Naive thymus-derived CD4-positive, alpha-beta T cell (primary cell): ENCODE measurements at regions of chr12 and their contacts with region 1.

Region 1: DNA sequence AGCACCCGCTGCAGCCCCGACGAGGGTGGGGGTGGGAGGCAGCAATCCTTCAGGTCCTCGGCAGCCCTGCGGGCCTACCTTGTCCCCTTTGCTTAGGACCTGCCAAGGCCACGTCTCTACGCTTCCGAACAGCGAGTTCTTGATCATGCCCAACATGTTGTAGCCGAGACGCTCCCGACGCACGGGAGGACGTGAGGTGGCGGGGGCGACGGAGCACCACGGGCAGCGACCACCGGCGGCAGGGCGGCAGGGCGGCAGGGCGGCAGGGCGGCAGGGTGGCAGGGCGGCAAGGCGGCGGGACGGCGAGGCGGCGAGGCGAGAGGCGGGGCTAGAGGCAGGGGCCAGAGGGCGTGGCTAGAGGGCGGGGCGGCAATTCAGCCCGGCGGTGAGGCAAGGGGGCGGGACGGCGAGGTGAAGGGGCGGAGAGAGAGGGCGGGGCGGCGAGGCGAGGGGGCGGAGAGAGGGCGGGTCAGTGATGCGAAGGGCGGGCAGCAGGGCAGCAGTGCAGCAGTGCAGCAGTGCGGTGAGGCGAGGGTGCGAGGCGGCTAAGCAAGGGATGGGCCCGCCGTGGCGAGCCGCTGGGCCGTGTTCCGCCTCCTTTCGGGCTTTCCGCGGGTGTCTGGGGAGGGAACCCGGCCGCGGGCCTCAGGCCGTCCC is at the start of gene HEBP1:
- DNase-seq: peak; percentile 86 to 99 (median 93)
- ATAC-seq: peak; percentile 97
- H3K4me3 ChIP-seq: peak within 1 kb of the TSS; percentile 74
- H3K4me3 Mint-ChIP-seq: peak within 1 kb of the TSS; percentile 90 to 98 (median 95)
- H3K27ac ChIP-seq: peak within 1 kb of the TSS; percentile 83
- H3K27ac Mint-ChIP-seq: peak within 1 kb of the TSS; percentile 53 to 96 (median 90)
- H3K4me1 ChIP-seq: peaks cover 8 to 23% of the 10 kb centered on the region in 2 donors
- H3K4me1 Mint-ChIP-seq: peaks cover 30 to 45% (median 35%) of the 10 kb centered on the region in 7 donors
- H3K27me3 ChIP-seq: peaks cover 0 to 5% of the 10 kb centered on the region in 2 donors
- H3K27me3 Mint-ChIP-seq: peaks cover 0 to 31% (median 0%) of the 10 kb centered on the region in 5 donors
- total RNA-seq, gene HEBP1: 10.9 to 23.4 (median 13.6) TPM

Region 2: GRCh38 chr12:12266873-12267741 is 733.0 kb before region 1 on chr12 and contains the start of gene LRP6:
- CTCF ChIA-PET with region 1: no interaction called
- POLR2A ChIA-PET with region 1: no interaction called
- intact Hi-C with region 1: loop called in 1 of 2 experiments (anchors 5 kb)
- DNase-seq: peak; percentile 57 to 83 (median 75)
- ATAC-seq: peak; percentile 91
- H3K4me3 ChIP-seq: peak within 1 kb of the TSS; percentile 86
- H3K4me3 Mint-ChIP-seq: peak within 1 kb of the TSS; percentile 79 to 93 (median 88)
- H3K27ac ChIP-seq: peak within 1 kb of the TSS; percentile 68
- H3K27ac Mint-ChIP-seq: peak within 1 kb of the TSS; percentile 29 to 88 (median 73)
- H3K4me1 ChIP-seq: peaks cover 8 to 10% of the 10 kb centered on the region in 2 donors
- H3K4me1 Mint-ChIP-seq: peaks cover 14 to 40% (median 31%) of the 10 kb centered on the region in 7 donors
- H3K27me3 ChIP-seq: peaks cover 0 to 10% of the 10 kb centered on the region in 2 donors
- H3K27me3 Mint-ChIP-seq: peaks cover 0 to 53% (median 14%) of the 10 kb centered on the region in 5 donors
- total RNA-seq, gene LRP6: 1.6 to 12.6 (median 7.4) TPM

Region 3: DNA sequence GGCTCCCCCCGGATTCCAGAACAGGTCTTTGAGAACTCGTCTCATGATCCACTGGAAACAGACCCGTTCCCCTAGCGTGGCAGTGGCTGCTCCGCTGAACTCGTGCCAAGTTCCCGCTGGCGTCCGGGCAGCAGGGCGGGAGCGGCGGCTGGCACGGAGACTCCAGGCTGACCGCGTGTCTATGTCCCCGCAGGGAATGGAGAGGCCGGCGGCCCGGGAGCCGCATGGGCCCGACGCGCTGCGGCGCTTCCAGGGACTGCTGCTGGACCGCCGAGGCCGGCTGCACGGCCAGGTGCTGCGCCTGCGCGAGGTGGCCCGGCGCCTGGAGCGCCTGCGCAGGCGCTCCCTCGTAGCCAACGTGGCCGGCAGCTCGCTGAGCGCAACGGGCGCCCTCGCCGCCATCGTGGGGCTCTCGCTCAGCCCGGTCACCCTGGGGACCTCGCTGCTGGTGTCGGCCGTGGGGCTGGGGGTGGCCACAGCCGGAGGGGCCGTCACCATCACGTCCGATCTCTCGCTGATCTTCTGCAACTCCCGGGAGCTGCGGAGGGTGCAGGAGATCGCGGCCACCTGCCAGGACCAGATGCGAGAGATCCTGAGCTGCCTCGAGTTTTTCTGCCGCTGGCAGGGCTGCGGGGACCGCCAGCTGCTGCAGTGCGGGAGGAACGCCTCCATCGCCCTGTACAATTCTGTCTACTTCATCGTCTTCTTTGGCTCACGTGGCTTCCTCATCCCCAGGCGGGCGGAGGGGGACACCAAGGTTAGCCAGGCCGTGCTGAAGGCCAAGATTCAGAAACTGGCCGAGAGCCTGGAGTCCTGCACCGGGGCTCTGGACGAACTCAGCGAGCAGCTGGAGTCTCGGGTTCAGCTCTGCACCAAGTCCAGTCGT is 213.1 kb before region 1 on chr12:
- CTCF ChIA-PET with region 1: interaction called, 3 read pairs
- POLR2A ChIA-PET with region 1: no interaction called
- intact Hi-C with region 1: loop called (anchors 1 kb)
- DNase-seq: peak; percentile 62 to 78 (median 72)
- ATAC-seq: peak; percentile 92
- H3K4me3 ChIP-seq: peak overlapping the region; percentile 86
- H3K4me3 Mint-ChIP-seq: peak overlapping the region; percentile 76 to 89 (median 85)
- H3K27ac ChIP-seq: peak overlapping the region; percentile 78
- H3K27ac Mint-ChIP-seq: peak overlapping the region; percentile 62 to 96 (median 88)
- H3K4me1 ChIP-seq: peaks cover 6 to 9% of the 10 kb centered on the region in 2 donors
- H3K4me1 Mint-ChIP-seq: peaks cover 6 to 35% (median 17%) of the 10 kb centered on the region in 7 donors
- H3K27me3 ChIP-seq: no peaks in the 10 kb centered on the region
- H3K27me3 Mint-ChIP-seq: no peaks in the 10 kb centered on the region

Region 4: DNA sequence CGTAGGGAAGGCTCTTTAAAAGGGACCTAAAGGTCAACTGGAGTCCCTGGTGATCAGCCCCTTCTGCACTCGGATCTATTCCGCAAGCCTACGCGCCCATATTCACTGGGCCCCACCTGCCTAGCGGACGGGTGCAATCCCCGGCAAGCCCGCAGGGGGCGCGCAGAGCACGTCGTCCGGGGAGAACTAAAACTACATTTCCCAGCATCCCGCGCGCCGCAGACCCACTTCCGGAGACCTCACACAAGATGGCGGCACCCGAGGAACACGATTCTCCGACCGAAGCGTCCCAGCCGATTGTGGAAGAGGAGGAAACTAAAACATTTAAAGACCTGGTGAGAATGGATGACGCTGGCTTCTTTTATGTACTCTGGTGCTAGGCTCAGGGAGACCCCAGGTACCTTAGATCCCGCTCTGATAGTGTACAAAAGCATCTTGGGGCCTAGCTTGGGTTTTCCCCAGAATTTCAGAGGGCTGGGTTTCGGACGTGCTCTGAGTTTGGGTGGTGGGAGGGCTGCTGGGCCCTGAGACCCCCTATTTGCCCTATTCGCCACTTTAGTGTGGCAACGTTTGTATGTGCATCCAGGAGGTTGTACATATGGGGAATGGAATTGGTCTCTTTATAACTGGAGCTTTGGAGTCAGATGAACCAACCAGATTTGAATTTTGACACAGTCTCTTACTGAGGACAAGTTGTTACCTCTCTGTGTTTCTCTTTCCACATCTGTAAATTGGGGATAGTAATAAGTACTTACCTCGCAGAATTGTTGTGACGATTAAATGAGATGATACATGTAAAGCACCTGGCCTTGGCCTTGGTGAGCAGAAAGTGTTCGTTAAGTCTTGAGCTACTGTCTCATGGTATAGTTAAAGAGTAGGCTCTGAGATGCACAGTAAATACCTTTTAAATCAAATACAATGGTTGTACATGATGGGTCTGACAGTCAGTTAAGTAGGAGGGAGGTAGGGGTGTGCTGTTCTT is 186.7 kb before region 1 on chr12 and contains the start of gene DDX47:
- CTCF ChIA-PET with region 1: no interaction called
- POLR2A ChIA-PET with region 1: no interaction called
- intact Hi-C with region 1: loop called (anchors 1 kb)
- DNase-seq: peak; percentile 91 to 99 (median 96)
- ATAC-seq: peak; percentile 97
- H3K4me3 ChIP-seq: peak within 1 kb of the TSS; percentile 96
- H3K4me3 Mint-ChIP-seq: peak within 1 kb of the TSS; percentile 89 to 99 (median 96)
- H3K27ac ChIP-seq: peak within 1 kb of the TSS; percentile 99
- H3K27ac Mint-ChIP-seq: peak within 1 kb of the TSS; percentile 84 to 99 (median 97)
- H3K4me1 ChIP-seq: peaks cover 28 to 41% of the 10 kb centered on the region in 2 donors
- H3K4me1 Mint-ChIP-seq: peaks cover 36 to 84% (median 69%) of the 10 kb centered on the region in 7 donors
- H3K27me3 ChIP-seq: no peaks in the 10 kb centered on the region
- H3K27me3 Mint-ChIP-seq: no peaks in the 10 kb centered on the region
- total RNA-seq, gene DDX47: 71.6 to 154 (median 75.5) TPM

Region 5: GRCh38 chr12:12916135-12916944 is 83.7 kb before region 1 on chr12:
- CTCF ChIA-PET with region 1: interaction called, 3 read pairs
- POLR2A ChIA-PET with region 1: interaction called, 3 read pairs
- intact Hi-C with region 1: loop called in 1 of 2 experiments (anchors 2 kb)
- DNase-seq: peak; percentile 72 to 87 (median 81)
- ATAC-seq: peak; percentile 99
- H3K4me3 ChIP-seq: no peak overlapping the region
- H3K4me3 Mint-ChIP-seq: peak overlapping the region in 7 of 10 donors; percentile 2 to 63 (median 40)
- H3K27ac ChIP-seq: no peak overlapping the region
- H3K27ac Mint-ChIP-seq: peak overlapping the region in 4 of 9 donors; percentile 6 to 55 (median 12)
- H3K4me1 ChIP-seq: peaks cover 0 to 3% of the 10 kb centered on the region in 2 donors
- H3K4me1 Mint-ChIP-seq: peaks cover 9 to 17% (median 11%) of the 10 kb centered on the region in 7 donors
- H3K27me3 ChIP-seq: no peaks in the 10 kb centered on the region
- H3K27me3 Mint-ChIP-seq: peaks cover 0 to 30% (median 10%) of the 10 kb centered on the region in 5 donors

Region 6: GRCh38 chr12:13044002-13044905 is 44.2 kb after region 1 on chr12 and contains the start of gene FAM234B:
- CTCF ChIA-PET with region 1: no interaction called
- POLR2A ChIA-PET with region 1: no interaction called
- intact Hi-C with region 1: loop called (anchors 1 kb)
- DNase-seq: peak; percentile 41 to 77 (median 66)
- ATAC-seq: peak; percentile 95
- H3K4me3 ChIP-seq: peak within 1 kb of the TSS; percentile 89
- H3K4me3 Mint-ChIP-seq: peak within 1 kb of the TSS; percentile 76 to 91 (median 87)
- H3K27ac ChIP-seq: peak within 1 kb of the TSS; percentile 79
- H3K27ac Mint-ChIP-seq: peak within 1 kb of the TSS in 7 of 9 donors; percentile 31 to 79 (median 66)
- H3K4me1 ChIP-seq: peaks cover 0 to 5% of the 10 kb centered on the region in 2 donors
- H3K4me1 Mint-ChIP-seq: peaks cover 5 to 20% (median 14%) of the 10 kb centered on the region in 7 donors
- H3K27me3 ChIP-seq: no peaks in the 10 kb centered on the region
- H3K27me3 Mint-ChIP-seq: peaks cover 0 to 32% (median 5%) of the 10 kb centered on the region in 5 donors
- total RNA-seq, gene FAM234B: 2.7 to 5.8 (median 4.3) TPM

Region 7: DNA sequence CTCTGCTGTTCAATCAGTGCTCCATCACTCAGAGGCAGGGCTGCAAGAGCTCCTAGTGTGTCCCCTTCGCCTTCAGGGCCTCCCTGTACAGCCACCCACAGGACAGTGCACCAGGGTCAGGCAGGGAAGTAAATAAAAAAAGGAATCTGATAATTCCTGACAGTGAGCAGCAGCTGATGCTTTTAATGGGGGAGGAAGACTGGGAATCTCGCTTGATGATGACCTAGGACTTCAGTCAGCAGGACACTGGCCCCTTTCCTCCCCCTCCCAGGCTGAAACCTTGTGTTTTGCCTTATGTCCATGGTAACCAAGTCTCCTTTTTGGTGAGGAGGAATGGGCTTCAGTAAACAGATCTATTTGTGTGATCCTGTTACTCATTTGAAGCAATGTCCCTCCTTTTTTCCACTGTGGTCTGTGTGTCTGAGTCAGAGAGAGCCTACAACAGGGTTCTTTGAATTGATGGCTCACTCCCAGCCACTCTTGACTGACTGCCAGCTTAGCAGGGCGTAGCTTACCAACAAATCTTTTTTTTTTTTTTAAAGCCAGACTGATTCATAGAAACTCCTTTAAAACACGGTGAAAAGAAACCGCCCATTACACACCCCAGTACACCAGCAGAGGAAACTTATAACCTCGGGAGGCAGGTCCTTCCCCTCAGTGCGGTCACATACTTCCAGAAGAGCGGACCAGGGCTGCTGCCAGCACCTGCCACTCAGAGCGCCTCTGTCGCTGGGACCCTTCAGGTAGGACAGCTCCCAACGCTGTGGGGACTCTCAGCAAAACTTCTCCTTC is 196.2 kb after region 1 on chr12 and contains the start of gene EMP1:
- CTCF ChIA-PET with region 1: no interaction called
- POLR2A ChIA-PET with region 1: no interaction called
- intact Hi-C with region 1: loop called in 1 of 2 experiments (anchors 1 kb)
- DNase-seq: peak in 8 of 9 donors; percentile 34 to 78 (median 56)
- ATAC-seq: peak; percentile 89
- H3K4me3 ChIP-seq: peak within 1 kb of the TSS; percentile 18
- H3K4me3 Mint-ChIP-seq: peak within 1 kb of the TSS; percentile 69 to 91 (median 82)
- H3K27ac ChIP-seq: peak within 1 kb of the TSS; percentile 34
- H3K27ac Mint-ChIP-seq: peak within 1 kb of the TSS; percentile 36 to 92 (median 78)
- H3K4me1 ChIP-seq: peaks cover 8 to 11% of the 10 kb centered on the region in 2 donors
- H3K4me1 Mint-ChIP-seq: peaks cover 19 to 41% (median 22%) of the 10 kb centered on the region in 7 donors
- H3K27me3 ChIP-seq: no peaks in the 10 kb centered on the region
- H3K27me3 Mint-ChIP-seq: peaks cover 0 to 42% (median 4%) of the 10 kb centered on the region in 5 donors
- total RNA-seq, gene EMP1: 3.4 to 40.1 (median 4.4) TPM

Region 8: GRCh38 chr12:13304924-13305323 is 304.8 kb after region 1 on chr12:
- CTCF ChIA-PET with region 1: no interaction called
- POLR2A ChIA-PET with region 1: no interaction called
- intact Hi-C with region 1: no loop called
- DNase-seq: no peak
- ATAC-seq: no peak
- H3K4me3 ChIP-seq: no peak overlapping the region
- H3K4me3 Mint-ChIP-seq: no peak overlapping the region
- H3K27ac ChIP-seq: no peak overlapping the region
- H3K27ac Mint-ChIP-seq: no peak overlapping the region
- H3K4me1 ChIP-seq: no peaks in the 10 kb centered on the region
- H3K4me1 Mint-ChIP-seq: no peaks in the 10 kb centered on the region
- H3K27me3 ChIP-seq: no peaks in the 10 kb centered on the region
- H3K27me3 Mint-ChIP-seq: peaks cover 9 to 56% (median 32%) of the 10 kb centered on the region in 5 donors